ENCODE measurements at regions of chr3 and their contacts with region 1.

Region 1: GRCh38 chr3:98022978-98023820 is 11.9 kb downstream of the GABRR3 start:
- DNase-seq: peak; percentile 95
- H3K4me3 Mint-ChIP-seq: no peak overlapping the region
- H3K27ac Mint-ChIP-seq: peak overlapping the region; percentile 28
- H3K4me1 Mint-ChIP-seq: peaks cover 14% of the 10 kb centered on the region
- H3K27me3 Mint-ChIP-seq: no peaks in the 10 kb centered on the region

Region 2: DNA sequence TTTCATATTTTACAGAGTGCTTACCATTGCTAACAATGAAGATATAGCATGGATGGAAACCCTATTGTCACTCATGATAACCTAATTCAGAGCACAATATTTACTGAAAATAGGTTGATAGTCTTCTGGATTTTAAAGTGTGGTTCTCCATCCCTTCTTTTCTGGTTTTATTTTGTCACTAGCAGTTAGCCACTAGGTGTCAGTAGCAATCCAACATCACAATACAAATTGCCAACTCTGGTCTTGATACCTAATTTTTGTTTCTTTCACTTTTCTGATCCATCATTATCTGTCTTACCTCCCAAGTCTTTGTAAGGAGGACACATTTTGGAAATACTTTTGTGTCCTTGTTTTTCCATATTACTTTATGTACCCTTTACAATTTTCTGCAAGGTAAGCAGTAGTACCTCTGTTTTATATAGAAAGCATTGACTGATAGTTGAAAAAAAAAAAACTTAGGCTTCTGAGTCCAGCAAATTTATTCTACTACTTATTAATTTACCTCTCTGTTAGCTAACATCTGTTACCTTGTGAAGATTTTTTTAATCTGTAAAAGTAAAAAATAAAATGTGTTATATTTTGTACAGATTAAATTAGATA is 229.7 kb before region 1 on chr3:
- CTCF ChIA-PET with region 1: interaction called, 15 read pairs
- POLR2A ChIA-PET with region 1: no interaction called
- DNase-seq: peak; percentile 63
- H3K4me3 Mint-ChIP-seq: no peak overlapping the region
- H3K27ac Mint-ChIP-seq: no peak overlapping the region
- H3K4me1 Mint-ChIP-seq: peaks cover 3% of the 10 kb centered on the region
- H3K27me3 Mint-ChIP-seq: no peaks in the 10 kb centered on the region

Region 3: GRCh38 chr3:97949111-97949485 is 74.1 kb before region 1 on chr3:
- CTCF ChIA-PET with region 1: interaction called, 10 read pairs
- POLR2A ChIA-PET with region 1: no interaction called
- DNase-seq: no peak
- H3K4me3 Mint-ChIP-seq: no peak overlapping the region
- H3K27ac Mint-ChIP-seq: peak overlapping the region; percentile 48
- H3K4me1 Mint-ChIP-seq: no peaks in the 10 kb centered on the region
- H3K27me3 Mint-ChIP-seq: no peaks in the 10 kb centered on the region

Region 4: GRCh38 chr3:98039322-98040024 is 16.3 kb after region 1 on chr3:
- CTCF ChIA-PET with region 1: interaction called, 14 read pairs
- POLR2A ChIA-PET with region 1: no interaction called
- DNase-seq: peak; percentile 86
- H3K4me3 Mint-ChIP-seq: peak overlapping the region; percentile 66
- H3K27ac Mint-ChIP-seq: peak overlapping the region; percentile 82
- H3K4me1 Mint-ChIP-seq: peaks cover 19% of the 10 kb centered on the region
- H3K27me3 Mint-ChIP-seq: peaks cover 34% of the 10 kb centered on the region

Region 5: GRCh38 chr3:98274914-98275313 is 251.7 kb after region 1 on chr3:
- CTCF ChIA-PET with region 1: no interaction called
- POLR2A ChIA-PET with region 1: no interaction called
- DNase-seq: no peak
- H3K4me3 Mint-ChIP-seq: no peak overlapping the region
- H3K27ac Mint-ChIP-seq: no peak overlapping the region
- H3K4me1 Mint-ChIP-seq: peaks cover 2% of the 10 kb centered on the region
- H3K27me3 Mint-ChIP-seq: peaks cover 7% of the 10 kb centered on the region